ENCODE measurements at regions of chr2 and their contacts with region 1.

Region 1: GRCh38 chr2:48332286-48332685 is 197.7 kb upstream of the STON1 start:
- DNase-seq: peak; percentile 51 to 73 (median 71)
- H3K4me3 ChIP-seq: peak overlapping the region in 1 of 7 experiments; percentile 50
- H3K27ac ChIP-seq: no peak overlapping the region
- H3K4me1 ChIP-seq: peaks cover 3 to 18% (median 15%) of the 10 kb centered on the region in 4 experiments
- H3K27me3 ChIP-seq: no peaks in the 10 kb centered on the region

Region 2: GRCh38 chr2:48322251-48322650 is 10.0 kb before region 1 on chr2:
- CTCF ChIA-PET with region 1: interaction called, 12 read pairs
- POLR2A ChIA-PET with region 1: no interaction called
- DNase-seq: no peak
- H3K4me3 ChIP-seq: no peak overlapping the region
- H3K27ac ChIP-seq: no peak overlapping the region
- H3K4me1 ChIP-seq: peaks cover 4 to 35% (median 29%) of the 10 kb centered on the region in 4 experiments
- H3K27me3 ChIP-seq: no peaks in the 10 kb centered on the region

Region 3: DNA sequence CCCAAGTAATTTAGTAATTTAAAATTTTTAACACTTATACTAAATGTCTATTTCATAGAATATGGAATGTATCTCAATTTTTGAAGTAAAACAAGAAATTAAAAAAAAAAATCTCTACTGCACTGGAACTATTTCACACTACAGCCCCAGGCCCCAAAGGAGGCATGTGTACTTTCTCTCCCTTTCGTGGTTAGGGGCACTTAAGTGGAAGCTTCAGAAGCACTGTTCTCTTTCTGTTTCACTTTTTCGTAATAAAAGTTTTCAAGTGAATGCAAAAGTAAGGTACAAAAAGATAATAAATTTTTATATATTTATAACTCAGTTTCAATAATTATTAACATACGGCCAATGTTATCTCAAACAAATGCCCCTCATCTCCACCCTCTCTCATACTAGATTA is 73.8 kb after region 1 on chr2:
- CTCF ChIA-PET with region 1: no interaction called
- POLR2A ChIA-PET with region 1: no interaction called
- DNase-seq: peak in 2 of 3 donors; percentile 62 to 75
- H3K4me3 ChIP-seq: peak overlapping the region in 1 of 7 experiments; percentile 33
- H3K27ac ChIP-seq: no peak overlapping the region
- H3K4me1 ChIP-seq: peaks cover 0 to 9% (median 2%) of the 10 kb centered on the region in 4 experiments
- H3K27me3 ChIP-seq: no peaks in the 10 kb centered on the region